Heart right ventricle (tissue), 16 donors: ENCODE measurements at regions of chr19 and their contacts with region 1.

Region 1: DNA sequence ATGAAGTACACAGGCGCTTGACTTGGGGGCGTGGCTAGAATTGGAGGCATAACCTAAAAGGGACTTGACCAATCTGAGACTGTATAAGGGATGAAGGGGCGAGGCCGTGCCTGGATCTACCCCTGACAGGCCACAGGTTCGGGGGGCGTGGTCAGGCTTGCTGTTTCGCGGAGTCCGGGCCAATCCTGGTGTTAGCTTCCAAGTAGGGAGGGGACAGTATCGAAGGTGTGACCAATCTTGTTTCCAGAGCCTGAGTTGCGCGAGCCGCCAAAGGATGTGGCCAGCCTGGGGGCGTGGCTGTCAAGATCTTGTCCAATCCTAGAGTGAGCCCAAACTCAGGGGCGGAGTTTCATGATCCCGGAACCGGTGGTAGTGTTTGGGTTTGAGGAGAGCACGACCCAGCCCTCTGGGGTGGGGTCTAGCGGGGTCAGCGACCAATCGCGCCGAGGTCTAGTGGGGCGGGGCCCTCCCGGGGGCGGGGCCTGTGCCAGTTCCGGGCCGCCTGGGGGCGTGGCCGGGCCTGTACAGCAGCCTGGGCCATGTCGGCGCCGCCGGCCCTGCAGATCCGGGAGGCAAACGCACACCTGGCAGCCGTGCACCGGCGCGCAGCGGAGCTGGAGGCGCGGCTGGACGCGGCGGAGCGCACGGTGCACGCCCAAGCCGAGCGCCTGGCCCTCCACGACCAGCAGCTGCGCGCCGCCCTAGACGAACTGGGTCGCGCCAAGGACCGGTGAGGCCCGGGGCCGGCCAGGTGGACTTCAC is at the start of gene VMAC:
- DNase-seq: peak; percentile 99 to 100
- ATAC-seq: peak; percentile 85 to 92 (median 88)
- H3K4me3 ChIP-seq: peak within 1 kb of the TSS; percentile 57 to 97 (median 87)
- H3K27ac ChIP-seq: peak within 1 kb of the TSS; percentile 71 to 95 (median 88)
- H3K4me1 ChIP-seq: peaks cover 12 to 45% (median 36%) of the 10 kb centered on the region in 9 donors
- H3K27me3 ChIP-seq: no peaks in the 10 kb centered on the region
- CTCF ChIP-seq: peak in 1 of 9 donors; percentile 8
- total RNA-seq, gene VMAC: 1.3 to 3.9 (median 2.5) TPM

Region 2: DNA sequence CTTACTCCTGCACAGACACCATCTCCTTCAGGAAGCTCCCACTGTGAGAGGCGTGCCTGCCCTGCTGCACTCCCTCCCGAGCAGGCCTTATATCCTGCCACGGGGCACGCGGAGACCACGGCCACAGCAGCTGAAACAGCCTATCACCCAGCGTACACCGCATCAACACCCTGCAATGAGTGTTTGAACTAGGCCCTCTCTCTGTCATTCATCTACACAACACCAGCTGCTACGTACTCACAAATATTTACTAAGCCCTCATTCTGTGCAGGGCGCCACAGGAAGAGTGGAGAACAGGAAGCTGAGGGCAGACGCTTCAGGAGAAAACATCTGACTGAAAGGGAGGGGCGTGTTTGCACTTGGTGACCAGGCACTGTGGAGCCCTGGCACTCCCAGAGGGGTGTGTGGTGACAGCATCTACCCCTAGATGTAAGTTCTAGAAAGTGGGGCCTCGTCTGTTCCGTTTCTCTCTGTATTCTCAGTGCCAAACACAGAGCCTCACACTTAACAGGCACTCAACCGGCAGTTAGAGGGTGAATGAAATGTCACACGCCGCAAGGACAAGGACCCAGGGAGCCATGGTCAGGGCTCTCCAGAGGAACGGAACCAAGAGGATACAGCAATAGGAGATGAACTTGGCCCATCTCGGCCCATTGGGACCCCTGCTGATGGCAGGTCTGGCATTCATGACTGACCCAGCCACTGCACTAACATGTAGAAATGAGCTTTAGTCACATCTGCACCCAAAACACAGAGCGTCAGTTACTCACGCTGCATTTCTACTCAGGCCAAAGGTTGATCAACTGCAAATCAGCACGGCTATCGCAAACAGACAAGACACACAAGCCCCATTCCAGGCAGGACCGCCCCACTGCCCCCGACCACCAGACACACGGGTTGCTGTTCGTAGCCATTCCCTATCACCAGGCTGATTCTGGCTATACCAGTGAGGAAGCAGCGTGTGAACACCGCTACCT is 57.7 kb after region 1 on chr19:
- intact Hi-C with region 1: loop called in 1 of 10 experiments (anchors 5 kb)
- DNase-seq: no peak
- ATAC-seq: peak; percentile 12 to 56 (median 50)
- H3K4me3 ChIP-seq: peak overlapping the region in 4 of 10 donors; percentile 3 to 29 (median 5)
- H3K27ac ChIP-seq: peak overlapping the region in 9 of 10 donors; percentile 52 to 78 (median 68)
- H3K4me1 ChIP-seq: peaks cover 40 to 100% (median 85%) of the 10 kb centered on the region in 9 donors
- H3K27me3 ChIP-seq: no peaks in the 10 kb centered on the region
- CTCF ChIP-seq: no peak

Region 3: DNA sequence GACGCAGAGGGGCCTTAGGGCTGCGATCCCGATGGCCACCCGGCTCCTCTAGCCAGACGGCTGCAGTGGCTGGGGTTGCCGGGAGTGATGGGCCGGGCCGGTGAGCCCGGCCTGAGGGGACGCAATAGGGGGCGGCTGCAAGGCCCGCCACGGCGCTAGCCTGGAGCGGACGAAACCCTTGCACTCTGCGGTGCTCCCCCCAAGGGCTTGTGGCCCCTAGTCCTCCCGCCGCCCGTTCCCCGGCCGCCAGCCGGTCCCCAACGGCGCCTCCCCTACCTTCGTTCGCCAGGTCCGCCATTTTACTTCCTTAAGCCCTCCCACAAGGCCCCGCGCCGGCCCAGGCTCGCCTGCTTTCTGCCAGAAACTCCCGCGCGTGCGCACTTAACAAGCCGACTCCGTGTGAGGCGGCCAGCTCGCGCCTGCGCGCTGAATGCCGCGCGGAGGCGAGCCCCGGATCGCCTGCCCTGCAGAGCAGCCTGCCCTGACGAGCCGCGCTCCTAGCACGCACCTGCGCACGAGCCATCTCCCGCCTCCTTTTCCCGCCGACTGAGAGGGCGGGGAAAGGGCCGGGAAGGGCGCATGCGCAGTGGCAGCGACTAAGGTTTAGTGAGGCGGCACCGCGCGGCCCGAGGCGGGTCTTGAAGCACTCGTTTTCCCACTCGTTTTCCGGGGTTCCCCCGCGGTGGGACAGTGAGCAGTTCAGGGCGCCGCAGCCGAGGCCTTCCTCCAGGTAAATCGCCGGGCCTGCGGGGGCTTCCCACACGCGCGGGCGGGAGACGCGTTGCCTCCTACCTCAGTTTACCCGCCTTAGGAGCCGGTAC is 73.5 kb after region 1 on chr19 and contains the start of gene RANBP3:
- intact Hi-C with region 1: loop called in 4 of 10 experiments (anchors 5 kb)
- DNase-seq: peak; percentile 98 to 99
- ATAC-seq: peak; percentile 98 to 99 (median 98)
- H3K4me3 ChIP-seq: peak within 1 kb of the TSS; percentile 80 to 100 (median 96)
- H3K27ac ChIP-seq: peak within 1 kb of the TSS; percentile 65 to 95 (median 92)
- H3K4me1 ChIP-seq: peaks cover 10 to 59% (median 47%) of the 10 kb centered on the region in 9 donors
- H3K27me3 ChIP-seq: no peaks in the 10 kb centered on the region
- CTCF ChIP-seq: no peak
- total RNA-seq, gene RANBP3: 51.4 to 76.1 (median 63.3) TPM